ENCODE measurements at regions of chrX and their contacts with region 1.

Region 1: GRCh38 chrX:78555401-78555980 is 103.6 kb downstream of the RTL3 start:
- DNase-seq: peak; percentile 86
- H3K4me3 ChIP-seq: no peak overlapping the region
- H3K27ac ChIP-seq: peak overlapping the region; percentile 93
- H3K4me1 ChIP-seq: peaks cover 9% of the 10 kb centered on the region
- H3K27me3 ChIP-seq: no peaks in the 10 kb centered on the region
- CTCF ChIP-seq: peak; percentile 60

Region 2: GRCh38 chrX:78119521-78120227 is 435.8 kb before region 1 on chrX:
- CTCF ChIA-PET with region 1: no interaction called
- POLR2A ChIA-PET with region 1: no interaction called
- intact Hi-C with region 1: loop called (anchors 10 kb)
- DNase-seq: no peak
- H3K4me3 ChIP-seq: no peak overlapping the region
- H3K27ac ChIP-seq: no peak overlapping the region
- H3K4me1 ChIP-seq: no peaks in the 10 kb centered on the region
- H3K27me3 ChIP-seq: no peaks in the 10 kb centered on the region
- CTCF ChIP-seq: 0 out of 2 replicates have a peak, but pooled peaks have one; percentile 28

Region 3: GRCh38 chrX:78886550-78886949 is 331.1 kb after region 1 on chrX:
- CTCF ChIA-PET with region 1: no interaction called
- POLR2A ChIA-PET with region 1: no interaction called
- intact Hi-C with region 1: loop called (anchors 1 kb)
- DNase-seq: peak; percentile 68
- H3K4me3 ChIP-seq: no peak overlapping the region
- H3K27ac ChIP-seq: no peak overlapping the region
- H3K4me1 ChIP-seq: no peaks in the 10 kb centered on the region
- H3K27me3 ChIP-seq: no peaks in the 10 kb centered on the region
- CTCF ChIP-seq: peak; percentile 62

Region 4: GRCh38 chrX:79081895-79082512 is 526.5 kb after region 1 on chrX:
- CTCF ChIA-PET with region 1: interaction called, 5 read pairs
- POLR2A ChIA-PET with region 1: no interaction called
- intact Hi-C with region 1: loop called (anchors 2 kb)
- DNase-seq: peak; percentile 86
- H3K4me3 ChIP-seq: no peak overlapping the region
- H3K27ac ChIP-seq: peak overlapping the region; percentile 83
- H3K4me1 ChIP-seq: peaks cover 27% of the 10 kb centered on the region
- H3K27me3 ChIP-seq: no peaks in the 10 kb centered on the region
- CTCF ChIP-seq: peak; percentile 75

Region 5: GRCh38 chrX:79270401-79270800 is 714.9 kb after region 1 on chrX:
- CTCF ChIA-PET with region 1: no interaction called
- POLR2A ChIA-PET with region 1: no interaction called
- intact Hi-C with region 1: loop called (anchors 2 kb)
- DNase-seq: peak; percentile 92
- H3K4me3 ChIP-seq: no peak overlapping the region
- H3K27ac ChIP-seq: peak overlapping the region; percentile 90
- H3K4me1 ChIP-seq: peaks cover 50% of the 10 kb centered on the region
- H3K27me3 ChIP-seq: no peaks in the 10 kb centered on the region
- CTCF ChIP-seq: peak; percentile 78

Region 6: DNA sequence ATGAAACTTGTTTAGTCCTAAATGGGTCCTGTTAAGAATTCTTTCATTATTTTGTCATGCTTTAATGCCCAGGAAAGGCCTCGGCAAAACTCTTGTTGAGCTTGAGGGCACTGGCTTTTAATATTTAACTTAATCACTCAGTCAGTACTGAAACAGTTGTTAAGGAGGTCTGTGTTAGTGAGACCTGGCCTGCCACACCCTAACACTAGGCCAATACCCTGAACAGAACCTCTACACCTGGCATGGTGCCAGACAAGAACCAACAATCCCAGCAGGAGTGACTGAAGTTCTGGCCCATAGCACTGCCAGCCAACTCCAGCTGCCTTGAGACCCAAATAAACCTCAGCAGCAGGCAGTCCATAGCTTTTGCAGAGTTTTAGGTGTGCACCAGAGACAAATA is 897.4 kb after region 1 on chrX:
- CTCF ChIA-PET with region 1: interaction called, 10 read pairs
- POLR2A ChIA-PET with region 1: no interaction called
- intact Hi-C with region 1: loop called (anchors 1 kb)
- DNase-seq: no peak
- H3K4me3 ChIP-seq: no peak overlapping the region
- H3K27ac ChIP-seq: no peak overlapping the region
- H3K4me1 ChIP-seq: peaks cover 4% of the 10 kb centered on the region
- H3K27me3 ChIP-seq: no peaks in the 10 kb centered on the region
- CTCF ChIP-seq: no peak

Measured in A673 (cell line).